ENCODE measurements at regions of chr16 and their contacts with region 1.

Region 1: DNA sequence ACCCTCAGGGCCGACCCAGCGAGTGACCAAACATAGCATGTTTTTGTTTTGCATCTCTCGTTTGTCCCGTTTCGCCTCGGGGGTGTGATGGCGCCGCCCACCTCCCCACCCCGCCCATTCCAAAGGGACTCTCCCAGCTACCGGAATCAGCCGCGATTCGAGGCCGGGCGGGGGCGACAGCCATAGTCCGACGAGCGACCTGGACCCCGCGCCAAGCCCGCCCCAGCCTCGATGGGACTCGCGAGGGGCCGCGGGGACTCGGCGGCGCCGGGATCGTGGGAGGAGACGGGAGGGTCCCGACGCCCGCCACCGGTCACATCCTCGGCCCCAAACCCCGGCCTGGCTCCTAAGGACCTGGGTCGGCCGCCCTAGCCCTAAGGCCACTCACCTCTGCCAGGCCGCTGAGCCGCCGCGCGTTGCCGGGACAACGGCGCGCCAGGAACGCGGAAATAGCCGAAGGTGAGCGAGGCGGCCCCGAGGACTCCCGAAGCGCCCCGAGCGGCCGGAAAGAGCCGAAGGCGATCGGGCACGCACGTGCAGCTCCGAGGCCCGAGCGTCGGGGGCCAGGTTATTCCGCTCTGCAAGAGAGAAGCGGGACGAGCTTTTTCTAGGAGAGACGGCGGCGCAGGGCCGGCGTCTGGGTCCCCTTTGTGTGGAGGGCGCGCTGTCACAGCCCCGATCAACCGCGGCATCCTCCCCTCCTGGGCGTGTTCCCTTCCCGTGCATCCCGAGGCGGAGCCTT is 1.4 kb downstream of the IFT140 start:
- DNase-seq: peak; percentile 42 to 89 (median 78)

Region 2: DNA sequence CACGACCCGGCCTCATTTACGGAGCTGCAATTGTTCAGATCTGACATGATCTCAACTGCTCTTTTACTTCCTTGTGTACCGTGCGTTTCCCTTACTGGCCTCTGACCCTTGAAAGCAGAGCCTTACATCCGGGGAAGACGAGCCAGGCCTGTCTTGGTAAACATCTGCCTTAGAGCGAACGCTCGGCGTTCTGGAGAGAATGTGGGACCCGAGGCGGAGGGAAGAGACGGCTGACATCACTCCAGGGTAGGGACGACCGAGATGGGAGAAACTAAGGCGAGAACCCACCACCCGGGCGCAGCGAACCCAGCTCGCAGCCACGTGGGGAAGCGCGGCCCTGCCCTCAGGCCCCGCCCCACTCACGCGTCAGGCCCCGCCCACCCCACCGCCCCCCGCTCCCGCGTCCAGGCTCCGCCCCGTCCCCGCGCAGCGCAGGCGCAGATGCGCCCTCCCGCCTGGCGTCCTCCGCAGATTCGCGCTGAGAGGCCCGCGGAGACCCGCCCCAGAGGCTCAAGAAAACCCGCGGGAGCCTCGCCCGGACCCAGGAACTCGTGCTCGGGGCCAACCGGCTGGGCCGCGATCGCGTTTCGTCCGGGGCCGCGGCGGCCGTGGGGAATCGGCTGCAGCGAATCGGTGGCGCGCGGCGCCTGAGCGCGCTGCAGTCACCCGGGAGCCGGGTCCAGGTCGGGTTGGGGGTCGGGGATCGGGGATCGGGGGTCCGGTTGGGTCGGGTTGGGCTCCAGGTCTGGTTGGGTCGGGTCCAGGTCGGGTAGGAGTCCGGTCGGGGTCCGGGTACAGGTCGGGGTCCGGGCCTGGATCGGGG is 117.3 kb before region 1 on chr16 and contains the start of gene TELO2:
- intact Hi-C with region 1: loop called (anchors 10 kb)
- DNase-seq: peak; percentile 40 to 93 (median 84)

Region 3: GRCh38 chr16:1705688-1706385 is 95.4 kb after region 1 on chr16 and contains the start of gene MAPK8IP3:
- intact Hi-C with region 1: loop called (anchors 5 kb)
- DNase-seq: peak; percentile 72 to 97 (median 93)

Measured in head of caudate nucleus (tissue), 42 donors.